Calu3 (cell line): ENCODE measurements at regions of chr2 and their contacts with region 1.

Region 1: GRCh38 chr2:62306751-62307468 is 111.0 kb downstream of the B3GNT2 start:
- DNase-seq: peak; percentile 62
- H3K4me3 Mint-ChIP-seq: peak overlapping the region; percentile 41
- H3K27ac Mint-ChIP-seq: peak overlapping the region; percentile 93
- H3K4me1 Mint-ChIP-seq: peaks cover 55% of the 10 kb centered on the region
- H3K27me3 Mint-ChIP-seq: no peaks in the 10 kb centered on the region
- CTCF ChIP-seq: no peak

Region 2: GRCh38 chr2:62321380-62322289 is 14.7 kb after region 1 on chr2:
- CTCF ChIA-PET with region 1: no interaction called
- intact Hi-C with region 1: no loop called
- DNase-seq: no peak
- H3K4me3 Mint-ChIP-seq: no peak overlapping the region
- H3K27ac Mint-ChIP-seq: no peak overlapping the region
- H3K4me1 Mint-ChIP-seq: peaks cover 8% of the 10 kb centered on the region
- H3K27me3 Mint-ChIP-seq: no peaks in the 10 kb centered on the region
- CTCF ChIP-seq: no peak

Region 3: DNA sequence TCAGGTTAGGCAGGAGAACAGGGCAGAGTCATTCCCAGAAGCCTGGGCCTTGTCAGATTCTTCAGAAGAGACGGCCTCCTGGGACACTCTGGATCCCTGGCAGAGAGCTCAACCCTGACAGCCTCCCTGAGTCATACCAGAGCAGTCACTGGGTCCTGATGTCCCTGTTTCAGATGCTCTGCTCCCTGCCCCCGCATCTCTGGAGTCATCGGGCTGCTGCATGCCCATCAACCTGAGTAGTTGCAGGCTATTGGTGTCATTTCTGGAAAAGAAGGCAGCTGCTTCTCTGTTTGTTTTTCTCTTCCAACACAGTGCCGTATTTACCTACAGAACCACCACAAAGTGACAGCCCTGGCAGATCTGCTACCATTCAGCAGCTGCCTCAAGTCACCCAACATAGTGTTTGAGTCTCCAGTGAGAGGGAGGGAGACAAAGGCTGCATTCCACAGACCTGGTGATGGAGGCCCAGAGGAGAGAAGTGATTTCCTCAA is 34.1 kb after region 1 on chr2:
- CTCF ChIA-PET with region 1: no interaction called
- intact Hi-C with region 1: loop called (anchors 2 kb)
- DNase-seq: no peak
- H3K4me3 Mint-ChIP-seq: no peak overlapping the region
- H3K27ac Mint-ChIP-seq: no peak overlapping the region
- H3K4me1 Mint-ChIP-seq: peaks cover 24% of the 10 kb centered on the region
- H3K27me3 Mint-ChIP-seq: no peaks in the 10 kb centered on the region
- CTCF ChIP-seq: no peak